ENCODE measurements at regions of chr20 and their contacts with region 1.

Region 1: GRCh38 chr20:45771182-45771759 is 20.4 kb downstream of the WFDC3 start:
- DNase-seq: peak; percentile 60
- H3K4me3 ChIP-seq: no peak overlapping the region
- H3K27ac ChIP-seq: no peak overlapping the region
- H3K4me1 ChIP-seq: no peaks in the 10 kb centered on the region
- H3K27me3 ChIP-seq: no peaks in the 10 kb centered on the region
- CTCF ChIP-seq: peak; percentile 89 to 92

Region 2: DNA sequence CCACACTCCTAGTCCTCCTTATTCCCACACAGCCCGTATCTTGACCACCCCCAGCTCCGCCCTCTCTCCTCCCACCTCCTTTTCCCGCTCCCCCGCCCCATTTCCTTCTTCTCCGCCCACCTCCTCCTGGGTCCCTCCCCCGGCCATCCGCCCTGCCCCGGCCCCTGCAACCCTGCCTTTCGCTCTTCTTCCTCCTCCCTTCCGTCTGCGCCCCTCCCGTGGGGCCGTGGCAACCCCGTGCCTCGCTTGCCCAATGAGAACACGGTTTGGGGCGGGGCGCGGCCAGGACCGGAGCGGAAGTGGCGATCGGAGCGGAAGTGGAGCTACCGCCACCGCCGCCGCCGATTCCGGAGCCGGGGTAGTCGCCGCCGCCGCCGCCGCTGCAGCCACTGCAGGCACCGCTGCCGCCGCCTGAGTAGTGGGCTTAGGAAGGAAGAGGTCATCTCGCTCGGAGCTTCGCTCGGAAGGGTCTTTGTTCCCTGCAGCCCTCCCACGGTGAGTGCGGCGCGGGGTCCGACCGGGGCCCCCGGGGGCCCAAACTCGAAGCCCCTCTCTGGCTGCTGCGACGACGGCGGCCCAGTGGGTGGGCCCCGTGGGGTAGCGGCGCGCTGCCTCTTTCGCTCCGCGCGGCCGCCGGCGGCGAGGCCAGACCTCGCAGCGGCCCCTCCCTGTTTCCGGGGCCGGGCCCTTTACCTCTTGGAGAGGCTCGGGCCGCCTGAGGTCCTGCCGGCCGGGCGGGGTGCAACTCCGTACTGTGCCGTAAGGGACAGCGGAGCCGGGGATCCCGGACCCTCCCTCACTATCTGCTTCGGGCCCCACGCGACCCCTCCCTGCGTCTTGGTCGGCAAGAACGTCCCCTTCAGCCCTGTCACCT is 885.6 kb before region 1 on chr20 and contains the start of gene YWHAB:
- CTCF ChIA-PET with region 1: interaction called, 13 read pairs
- dilution Hi-C with region 1: no loop called
- in situ Hi-C with region 1: no loop called
- intact Hi-C with region 1: no loop called
- DNase-seq: peak; percentile 98
- H3K4me3 ChIP-seq: peak within 1 kb of the TSS; percentile 72 to 98 (median 94)
- H3K27ac ChIP-seq: peak within 1 kb of the TSS; percentile 81
- H3K4me1 ChIP-seq: peaks cover 19% of the 10 kb centered on the region
- H3K27me3 ChIP-seq: no peaks in the 10 kb centered on the region
- CTCF ChIP-seq: peak in 1 of 2 donors; percentile 7
- total RNA-seq, gene YWHAB: 100 to 238 TPM

Region 3: GRCh38 chr20:45223136-45223535 is 548.1 kb before region 1 on chr20:
- CTCF ChIA-PET with region 1: no interaction called
- dilution Hi-C with region 1: no loop called
- in situ Hi-C with region 1: no loop called
- intact Hi-C with region 1: no loop called
- DNase-seq: no peak
- H3K4me3 ChIP-seq: no peak overlapping the region
- H3K27ac ChIP-seq: no peak overlapping the region
- H3K4me1 ChIP-seq: no peaks in the 10 kb centered on the region
- H3K27me3 ChIP-seq: no peaks in the 10 kb centered on the region
- CTCF ChIP-seq: no peak

Region 4: GRCh38 chr20:45362804-45363610 is 408.3 kb before region 1 on chr20 and contains the start of gene SYS1:
- CTCF ChIA-PET with region 1: no interaction called
- dilution Hi-C with region 1: no loop called
- in situ Hi-C with region 1: no loop called
- intact Hi-C with region 1: loop called (anchors 1 kb)
- DNase-seq: peak; percentile 98
- H3K4me3 ChIP-seq: peak within 1 kb of the TSS; percentile 58 to 66 (median 59)
- H3K27ac ChIP-seq: peak within 1 kb of the TSS; percentile 88
- H3K4me1 ChIP-seq: peaks cover 37% of the 10 kb centered on the region
- H3K27me3 ChIP-seq: no peaks in the 10 kb centered on the region
- CTCF ChIP-seq: peak; percentile 84 to 85
- total RNA-seq, gene SYS1: 20.9 to 25.0 TPM

Region 5: DNA sequence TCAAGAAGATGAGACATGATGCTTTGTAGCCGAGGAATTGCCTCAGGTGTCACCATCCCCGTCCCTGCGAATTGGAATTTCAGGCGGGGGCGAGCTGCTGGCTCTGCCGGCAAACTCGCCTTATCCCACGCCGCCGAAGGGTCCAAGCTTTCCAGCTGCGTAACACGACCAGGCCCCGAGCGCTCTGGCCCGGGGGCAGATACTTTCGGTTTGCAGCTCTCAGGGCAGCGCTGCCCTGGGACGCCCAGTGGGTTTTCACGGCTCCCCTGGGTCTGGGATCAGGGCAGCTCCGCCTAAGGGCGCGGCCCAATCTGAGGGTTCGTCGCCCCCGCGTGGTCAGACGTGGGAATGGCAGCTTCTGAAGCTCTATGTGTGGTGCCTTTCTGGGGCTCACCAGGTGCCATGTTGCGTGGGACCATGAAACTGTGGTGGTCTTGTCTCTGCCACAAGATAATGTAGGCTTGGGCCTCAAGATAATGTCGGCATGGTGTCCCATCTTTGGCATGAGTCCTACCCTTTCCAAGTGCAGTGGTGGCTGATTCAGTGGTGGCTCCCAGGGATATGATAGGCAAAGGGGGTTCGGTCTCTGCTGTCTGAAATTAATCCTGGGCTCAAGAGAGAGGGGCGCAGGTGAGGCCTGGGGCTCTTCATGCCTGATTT is 334.4 kb before region 1 on chr20:
- CTCF ChIA-PET with region 1: no interaction called
- dilution Hi-C with region 1: no loop called
- in situ Hi-C with region 1: no loop called
- intact Hi-C with region 1: loop called (anchors 1 kb)
- DNase-seq: peak; percentile 70
- H3K4me3 ChIP-seq: peak overlapping the region; percentile 62 to 80 (median 72)
- H3K27ac ChIP-seq: no peak overlapping the region
- H3K4me1 ChIP-seq: no peaks in the 10 kb centered on the region
- H3K27me3 ChIP-seq: no peaks in the 10 kb centered on the region
- CTCF ChIP-seq: peak; percentile 88 to 98

Region 6: GRCh38 chr20:45545754-45546453 is 225.4 kb before region 1 on chr20:
- CTCF ChIA-PET with region 1: no interaction called
- dilution Hi-C with region 1: no loop called
- in situ Hi-C with region 1: loop called in 1 of 2 experiments (anchors 5 kb)
- intact Hi-C with region 1: loop called (anchors 1 kb)
- DNase-seq: peak; percentile 33
- H3K4me3 ChIP-seq: no peak overlapping the region
- H3K27ac ChIP-seq: no peak overlapping the region
- H3K4me1 ChIP-seq: no peaks in the 10 kb centered on the region
- H3K27me3 ChIP-seq: no peaks in the 10 kb centered on the region
- CTCF ChIP-seq: peak; percentile 17 to 46

Region 7: DNA sequence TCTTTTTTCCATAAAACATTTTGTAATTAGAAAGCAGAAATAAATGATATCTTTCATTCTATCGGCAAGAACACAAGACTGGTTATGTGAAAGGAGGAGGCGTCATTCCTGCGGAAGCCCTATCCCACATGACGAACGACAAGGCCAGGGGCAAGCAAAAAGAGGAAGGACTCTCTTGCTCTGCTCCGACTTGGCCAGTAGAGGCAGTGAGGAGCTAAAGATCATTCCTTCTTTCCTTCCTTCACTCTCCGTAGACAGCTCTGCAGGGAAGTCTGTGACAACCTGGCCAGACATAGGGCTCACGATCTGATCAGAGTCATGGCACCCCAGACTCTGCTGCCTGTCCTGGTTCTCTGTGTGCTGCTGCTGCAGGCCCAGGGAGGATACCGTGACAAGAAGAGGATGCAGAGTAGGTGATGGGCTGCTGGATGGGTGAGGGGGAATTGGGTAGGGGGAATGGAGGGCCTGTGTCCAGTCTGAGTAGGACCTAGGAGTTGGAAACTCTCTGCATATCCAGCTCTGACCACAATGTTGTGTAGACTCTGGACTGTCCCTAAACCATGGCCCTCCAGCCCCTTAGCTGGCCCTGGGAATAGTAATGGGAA is 141.7 kb before region 1 on chr20 and contains the start of gene WFDC10A:
- CTCF ChIA-PET with region 1: interaction called, 23 read pairs
- dilution Hi-C with region 1: no loop called
- in situ Hi-C with region 1: no loop called
- intact Hi-C with region 1: loop called (anchors 1 kb)
- DNase-seq: peak; percentile 68
- H3K4me3 ChIP-seq: no peak within 1 kb of the TSS
- H3K27ac ChIP-seq: no peak within 1 kb of the TSS
- H3K4me1 ChIP-seq: no peaks in the 10 kb centered on the region
- H3K27me3 ChIP-seq: no peaks in the 10 kb centered on the region
- CTCF ChIP-seq: peak; percentile 88 to 96
- total RNA-seq, gene WFDC10A: not detected

Region 8: GRCh38 chr20:45672765-45673164 is 98.5 kb before region 1 on chr20:
- CTCF ChIA-PET with region 1: no interaction called
- dilution Hi-C with region 1: no loop called
- in situ Hi-C with region 1: no loop called
- intact Hi-C with region 1: no loop called
- DNase-seq: no peak
- H3K4me3 ChIP-seq: no peak overlapping the region
- H3K27ac ChIP-seq: no peak overlapping the region
- H3K4me1 ChIP-seq: no peaks in the 10 kb centered on the region
- H3K27me3 ChIP-seq: no peaks in the 10 kb centered on the region
- CTCF ChIP-seq: no peak

Region 9: DNA sequence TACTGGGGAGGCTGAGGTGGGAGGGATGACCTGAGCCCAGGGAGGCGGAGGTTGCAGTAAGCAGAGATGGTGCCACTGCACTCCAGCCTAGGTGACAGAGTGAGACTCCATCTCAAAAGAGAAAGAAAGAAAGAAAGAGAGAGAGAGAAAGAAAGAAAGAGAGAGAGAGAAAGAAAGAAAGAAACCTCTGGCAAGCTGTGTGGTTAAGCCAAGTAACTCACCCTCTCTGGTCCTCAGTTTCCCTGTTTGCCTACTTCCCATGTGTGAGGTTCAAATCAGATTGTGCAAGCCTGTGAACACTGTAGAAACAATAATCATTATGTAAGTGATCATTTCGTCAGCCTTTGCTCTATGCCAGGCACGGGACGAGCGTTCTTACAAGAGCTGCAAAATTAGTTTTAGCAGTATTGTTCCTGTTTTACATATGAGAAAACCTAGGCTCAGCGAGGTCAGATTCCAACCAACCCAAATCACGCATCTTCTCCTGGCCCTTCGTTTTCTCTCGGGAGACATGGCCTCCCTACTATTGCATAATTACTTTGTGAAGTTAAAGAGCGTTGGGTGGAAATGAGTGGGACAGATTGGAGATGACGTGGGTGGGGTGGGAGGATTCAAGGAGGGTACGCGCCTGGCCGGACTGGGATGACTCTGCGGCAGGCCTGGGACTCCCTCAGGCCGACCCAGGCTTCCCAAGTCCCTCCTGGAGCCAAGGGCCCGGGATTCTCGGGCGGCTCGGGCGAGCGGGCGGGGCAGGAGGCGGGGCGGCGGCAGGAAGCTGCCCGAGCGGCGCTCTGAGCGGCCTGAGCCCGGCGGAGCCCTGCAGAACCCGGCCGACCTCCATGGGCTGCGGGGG is 62.0 kb after region 1 on chr20 and contains the start of gene SNX21:
- CTCF ChIA-PET with region 1: no interaction called
- dilution Hi-C with region 1: no loop called
- in situ Hi-C with region 1: no loop called
- intact Hi-C with region 1: no loop called
- DNase-seq: peak; percentile 80
- H3K4me3 ChIP-seq: peak within 1 kb of the TSS; percentile 60 to 94 (median 68)
- H3K27ac ChIP-seq: peak within 1 kb of the TSS; percentile 70
- H3K4me1 ChIP-seq: peaks cover 26% of the 10 kb centered on the region
- H3K27me3 ChIP-seq: no peaks in the 10 kb centered on the region
- CTCF ChIP-seq: no peak
- total RNA-seq, gene SNX21: 14.1 to 34.5 TPM